MCF 10A (cell line): ENCODE measurements at regions of chr17 and their contacts with region 1.

Region 1: GRCh38 chr17:41695954-41696756 is 7.5 kb downstream of the EIF1 start:
- DNase-seq: peak; percentile 94
- H3K4me3 Mint-ChIP-seq: no peak overlapping the region
- H3K27ac Mint-ChIP-seq: no peak overlapping the region
- H3K4me1 Mint-ChIP-seq: no peaks in the 10 kb centered on the region
- H3K27me3 Mint-ChIP-seq: no peaks in the 10 kb centered on the region
- CTCF ChIP-seq: peak; percentile 65

Region 2: GRCh38 chr17:41710468-41711090 is 14.4 kb after region 1 on chr17:
- CTCF ChIA-PET with region 1: interaction called, 18 read pairs
- POLR2A ChIA-PET with region 1: interaction called, 6 read pairs
- intact Hi-C with region 1: no loop called
- DNase-seq: peak; percentile 29
- H3K4me3 Mint-ChIP-seq: no peak overlapping the region
- H3K27ac Mint-ChIP-seq: no peak overlapping the region
- H3K4me1 Mint-ChIP-seq: no peaks in the 10 kb centered on the region
- H3K27me3 Mint-ChIP-seq: no peaks in the 10 kb centered on the region
- CTCF ChIP-seq: no peak

Region 3: GRCh38 chr17:41717408-41718286 is 21.5 kb after region 1 on chr17:
- CTCF ChIA-PET with region 1: interaction called, 18 read pairs
- POLR2A ChIA-PET with region 1: interaction called, 5 read pairs
- intact Hi-C with region 1: no loop called
- DNase-seq: peak; percentile 78
- H3K4me3 Mint-ChIP-seq: peak overlapping the region; percentile 51
- H3K27ac Mint-ChIP-seq: peak overlapping the region; percentile 66
- H3K4me1 Mint-ChIP-seq: peaks cover 10% of the 10 kb centered on the region
- H3K27me3 Mint-ChIP-seq: no peaks in the 10 kb centered on the region
- CTCF ChIP-seq: no peak

Region 4: DNA sequence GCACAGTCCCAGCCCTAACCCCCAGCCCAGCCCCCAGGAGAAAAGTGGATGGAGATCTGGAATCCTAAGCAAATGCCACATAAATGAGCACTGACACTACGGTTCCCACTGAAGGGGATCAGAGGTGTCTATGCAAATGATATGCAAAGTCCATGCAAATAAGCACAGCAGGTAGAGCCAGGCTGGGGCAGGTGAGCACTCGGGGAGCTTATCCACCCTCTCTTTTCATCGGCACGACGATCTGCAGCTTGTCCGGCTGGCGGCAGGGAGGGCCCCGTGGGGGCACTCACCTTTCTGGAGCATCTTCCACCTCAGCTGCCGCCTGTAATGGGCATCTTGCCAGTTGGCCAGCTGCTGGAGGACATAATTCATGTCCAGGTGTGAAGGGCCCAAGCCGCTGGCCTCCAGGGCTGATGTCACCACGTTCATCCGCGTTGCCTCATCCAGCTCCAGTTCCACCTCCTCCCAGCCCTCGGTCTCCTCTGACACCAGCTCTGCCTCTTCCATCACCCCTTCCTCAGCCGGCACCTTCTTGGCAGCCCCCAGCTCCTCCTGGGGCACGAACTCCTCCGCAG is 28.4 kb after region 1 on chr17:
- CTCF ChIA-PET with region 1: interaction called, 10 read pairs
- POLR2A ChIA-PET with region 1: interaction called, 3 read pairs
- intact Hi-C with region 1: no loop called
- DNase-seq: no peak
- H3K4me3 Mint-ChIP-seq: no peak overlapping the region
- H3K27ac Mint-ChIP-seq: no peak overlapping the region
- H3K4me1 Mint-ChIP-seq: peaks cover 6% of the 10 kb centered on the region
- H3K27me3 Mint-ChIP-seq: no peaks in the 10 kb centered on the region
- CTCF ChIP-seq: no peak